ENCODE measurements at regions of chr5 and their contacts with region 1.

Region 1: GRCh38 chr5:147504011-147504410 is 5.9 kb downstream of the DPYSL3 start:
- DNase-seq: no peak
- ATAC-seq: no peak
- H3K4me3 ChIP-seq: no peak overlapping the region
- H3K27ac ChIP-seq: no peak overlapping the region
- H3K4me1 ChIP-seq: no peaks in the 10 kb centered on the region
- H3K27me3 ChIP-seq: peaks cover 13% of the 10 kb centered on the region
- CTCF ChIP-seq: no peak

Region 2: DNA sequence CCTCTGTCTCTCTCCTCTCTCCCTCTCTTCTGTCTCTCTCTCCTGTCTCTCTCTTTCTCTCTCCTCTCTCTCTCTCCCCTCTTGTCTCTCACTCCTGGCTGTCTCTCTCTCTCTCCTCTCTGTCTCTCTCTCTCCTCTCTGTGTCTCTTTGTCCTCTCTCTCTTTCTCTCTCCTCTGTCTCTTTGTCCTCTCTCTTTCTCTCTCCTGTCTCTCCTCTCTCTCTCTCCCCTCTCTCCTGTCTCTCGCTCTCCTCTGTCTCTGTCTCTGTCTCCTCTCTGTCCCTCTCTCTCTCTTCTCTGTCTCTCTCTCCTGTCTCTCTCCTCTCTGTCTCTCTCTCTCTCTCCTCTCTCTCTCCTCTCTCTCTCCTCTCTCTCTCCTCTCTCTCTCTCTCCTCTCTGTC is 244.2 kb before region 1 on chr5:
- CTCF ChIA-PET with region 1: no interaction called
- POLR2A ChIA-PET with region 1: interaction called, 10 read pairs
- in situ Hi-C with region 1: no loop called
- intact Hi-C with region 1: no loop called
- DNase-seq: no peak
- ATAC-seq: no peak
- H3K4me3 ChIP-seq: no peak overlapping the region
- H3K27ac ChIP-seq: no peak overlapping the region
- H3K4me1 ChIP-seq: no peaks in the 10 kb centered on the region
- H3K27me3 ChIP-seq: peaks cover 3% of the 10 kb centered on the region
- CTCF ChIP-seq: no peak

Region 3: GRCh38 chr5:147796556-147797308 is 292.7 kb after region 1 on chr5:
- CTCF ChIA-PET with region 1: no interaction called
- POLR2A ChIA-PET with region 1: no interaction called
- in situ Hi-C with region 1: no loop called
- intact Hi-C with region 1: no loop called
- DNase-seq: no peak
- ATAC-seq: no peak
- H3K4me3 ChIP-seq: no peak overlapping the region
- H3K27ac ChIP-seq: no peak overlapping the region
- H3K4me1 ChIP-seq: no peaks in the 10 kb centered on the region
- H3K27me3 ChIP-seq: no peaks in the 10 kb centered on the region; the same call in 1 of the 2 replicates
- CTCF ChIP-seq: no peak